Gastrocnemius medialis (tissue), 4 donors: ENCODE measurements at regions of chr17 and their contacts with region 1.

Region 1: DNA sequence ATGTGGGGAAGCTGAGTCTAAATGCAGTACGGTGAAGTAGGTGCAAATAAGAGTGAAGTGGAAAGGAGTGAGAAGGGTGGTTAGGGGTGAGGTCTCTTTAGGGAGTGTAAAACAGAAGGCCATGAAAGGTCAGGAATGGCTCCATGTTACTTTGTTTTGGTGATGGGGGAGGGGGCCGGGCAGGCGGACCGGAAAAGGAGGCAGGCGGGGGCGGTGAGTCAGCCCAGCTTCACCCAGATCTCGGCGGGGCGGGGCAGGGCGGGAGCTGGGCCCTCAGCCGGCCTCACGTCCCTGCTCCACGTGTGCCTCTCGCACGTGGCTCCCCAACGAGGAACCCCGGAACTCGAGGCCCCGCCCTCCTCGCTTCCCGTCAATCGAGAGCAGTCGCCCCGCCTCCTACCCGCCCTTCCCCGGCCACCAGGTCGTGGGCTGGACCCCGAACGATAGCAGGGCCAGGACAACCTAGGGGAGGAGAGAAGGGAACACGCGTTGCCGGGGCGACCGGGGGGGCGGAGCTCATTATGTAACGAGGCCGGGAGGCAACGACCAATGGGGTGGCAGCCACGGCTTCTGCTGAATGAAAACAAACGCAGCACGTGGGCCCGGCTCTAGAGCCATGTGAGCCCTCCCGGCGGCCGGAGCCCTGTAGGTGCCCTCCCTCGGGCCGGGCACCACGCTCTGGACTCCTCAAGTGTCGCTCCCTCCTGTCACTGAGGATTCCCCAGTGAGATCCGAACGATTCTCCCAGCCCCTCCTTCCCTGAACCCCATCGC is 1.4 kb downstream of the NR1D1 start:
- DNase-seq: peak; percentile 100
- ATAC-seq: peak; percentile 37 to 39
- H3K4me3 ChIP-seq: peak overlapping the region; percentile 76 to 100 (median 82)
- H3K27ac ChIP-seq: peak overlapping the region; percentile 94 to 100 (median 98)
- H3K4me1 ChIP-seq: peaks cover 78 to 80% of the 10 kb centered on the region in 2 donors
- H3K27me3 ChIP-seq: no peaks in the 10 kb centered on the region
- CTCF ChIP-seq: no peak
- POLR2A ChIP-seq: peak; percentile 99

Region 2: GRCh38 chr17:40068917-40069750 is 29.9 kb before region 1 on chr17:
- in situ Hi-C with region 1: no loop called
- intact Hi-C with region 1: loop called (anchors 1 kb)
- DNase-seq: peak; percentile 96
- ATAC-seq: peak; percentile 46 to 48
- H3K4me3 ChIP-seq: peak overlapping the region; percentile 46 to 61 (median 52)
- H3K27ac ChIP-seq: peak overlapping the region; percentile 100
- H3K4me1 ChIP-seq: peaks cover 91 to 98% of the 10 kb centered on the region in 2 donors
- H3K27me3 ChIP-seq: no peaks in the 10 kb centered on the region
- CTCF ChIP-seq: no peak
- POLR2A ChIP-seq: peak; percentile 72 to 75

Region 3: DNA sequence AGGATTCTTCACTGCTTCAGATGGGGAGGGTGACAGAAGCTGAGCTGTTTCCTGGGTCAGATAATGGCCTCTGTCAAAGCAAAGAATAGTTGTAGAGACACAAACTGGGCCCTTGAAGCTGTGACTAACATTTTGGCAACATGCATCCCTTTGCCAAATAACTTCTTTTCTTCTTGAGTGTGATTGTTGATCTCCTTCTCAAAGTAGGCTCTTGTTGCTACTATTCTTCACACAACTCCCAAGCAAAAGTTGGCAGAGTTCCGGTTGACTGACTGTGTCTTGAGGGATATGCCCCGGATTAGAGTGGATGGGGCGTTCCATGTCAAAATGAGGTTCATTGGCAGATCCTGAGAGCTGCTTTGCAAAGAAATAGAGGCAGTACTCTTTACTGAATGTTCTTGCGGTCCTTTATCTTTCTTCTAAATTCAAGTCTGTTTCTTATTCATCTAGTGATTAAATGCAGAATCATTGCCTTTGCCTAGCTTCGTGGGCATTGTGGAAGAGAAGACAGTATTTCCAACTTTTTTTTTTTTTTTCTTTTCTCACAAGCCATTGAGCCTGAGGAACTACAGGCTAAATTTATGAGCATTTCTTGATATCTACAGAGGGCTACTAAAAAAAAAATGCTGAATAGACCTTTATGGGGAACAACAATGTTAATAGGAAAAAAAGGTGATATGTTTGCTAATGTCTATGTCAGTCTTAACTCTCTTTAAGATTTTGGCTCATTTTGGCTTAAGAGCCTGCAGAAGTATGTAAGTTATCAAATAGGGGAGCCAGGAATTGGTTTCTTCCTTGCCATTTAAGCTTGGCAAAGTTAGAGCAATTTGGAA is 125.9 kb after region 1 on chr17:
- in situ Hi-C with region 1: no loop called
- intact Hi-C with region 1: no loop called
- DNase-seq: no peak
- ATAC-seq: no peak
- H3K4me3 ChIP-seq: no peak overlapping the region
- H3K27ac ChIP-seq: peak overlapping the region; percentile 5 to 46 (median 28)
- H3K4me1 ChIP-seq: peaks cover 10 to 11% of the 10 kb centered on the region in 2 donors
- H3K27me3 ChIP-seq: no peaks in the 10 kb centered on the region
- CTCF ChIP-seq: no peak
- POLR2A ChIP-seq: no peak